ENCODE measurements at regions of chr7 and their contacts with region 1.

Region 1: GRCh38 chr7:140479062-140479738 is at the start of gene MKRN1:
- DNase-seq: peak; percentile 83 to 95 (median 93)
- ATAC-seq: peak; percentile 84
- H3K4me3 ChIP-seq: peak within 1 kb of the TSS; percentile 82 to 85
- H3K4me3 Mint-ChIP-seq: peak within 1 kb of the TSS; percentile 99
- H3K27ac ChIP-seq: peak within 1 kb of the TSS; percentile 69 to 81
- H3K27ac Mint-ChIP-seq: peak within 1 kb of the TSS; percentile 99
- H3K4me1 ChIP-seq: peaks cover 33% of the 10 kb centered on the region
- H3K4me1 Mint-ChIP-seq: peaks cover 27% of the 10 kb centered on the region
- H3K27me3 ChIP-seq: no peaks in the 10 kb centered on the region
- H3K27me3 Mint-ChIP-seq: no peaks in the 10 kb centered on the region
- CTCF ChIP-seq: no peak
- total RNA-seq, gene MKRN1: 146 to 148 TPM

Region 2: DNA sequence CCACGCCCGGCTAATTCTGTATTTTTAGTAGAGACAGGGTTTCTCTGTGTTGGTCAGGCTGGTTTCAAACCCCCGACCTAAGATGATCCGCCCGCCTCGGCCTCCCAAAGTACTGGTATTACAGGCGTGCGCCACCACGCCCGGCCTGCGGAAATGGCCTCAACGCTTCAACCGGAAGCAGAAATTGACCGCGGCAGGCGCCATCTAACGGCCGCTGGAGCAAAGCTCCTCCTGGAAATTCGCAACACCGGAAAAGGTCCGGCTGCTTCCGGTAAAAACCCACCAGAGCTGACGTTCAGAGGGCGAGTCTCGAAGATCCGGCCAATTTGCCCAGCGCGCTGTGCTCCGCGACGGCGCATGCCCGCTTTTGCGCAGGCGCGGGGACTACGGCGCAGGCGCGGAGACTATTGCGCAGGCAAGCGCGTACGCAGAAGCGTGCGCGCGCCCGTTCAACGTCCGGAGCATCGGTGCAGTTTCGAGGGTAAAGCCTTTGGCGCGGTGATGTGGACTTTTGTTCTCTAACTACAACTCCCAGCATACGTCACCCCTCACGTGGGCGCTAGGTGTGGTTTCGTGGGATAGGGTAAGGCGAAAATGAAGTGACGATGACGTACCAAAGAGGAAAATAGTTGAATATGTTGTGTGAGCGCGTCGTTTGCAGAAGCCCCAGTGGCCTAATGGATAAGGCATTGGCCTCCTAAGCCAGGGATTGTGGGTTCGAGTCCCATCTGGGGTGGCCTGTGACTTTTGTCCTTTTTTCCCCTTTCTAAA is 1139.0 kb before region 1 on chr7:
- CTCF ChIA-PET with region 1: no interaction called
- POLR2A ChIA-PET with region 1: no interaction called
- intact Hi-C with region 1: loop called in 1 of 2 experiments (anchors 5 kb)
- DNase-seq: peak; percentile 95 to 100 (median 97)
- ATAC-seq: peak; percentile 80
- H3K4me3 ChIP-seq: peak overlapping the region; percentile 69 to 85
- H3K4me3 Mint-ChIP-seq: peak overlapping the region; percentile 98
- H3K27ac ChIP-seq: peak overlapping the region; percentile 94 to 98
- H3K27ac Mint-ChIP-seq: peak overlapping the region; percentile 100
- H3K4me1 ChIP-seq: peaks cover 13% of the 10 kb centered on the region
- H3K4me1 Mint-ChIP-seq: peaks cover 32% of the 10 kb centered on the region
- H3K27me3 ChIP-seq: no peaks in the 10 kb centered on the region
- H3K27me3 Mint-ChIP-seq: peaks cover 2% of the 10 kb centered on the region
- CTCF ChIP-seq: peak; percentile 36

Region 3: DNA sequence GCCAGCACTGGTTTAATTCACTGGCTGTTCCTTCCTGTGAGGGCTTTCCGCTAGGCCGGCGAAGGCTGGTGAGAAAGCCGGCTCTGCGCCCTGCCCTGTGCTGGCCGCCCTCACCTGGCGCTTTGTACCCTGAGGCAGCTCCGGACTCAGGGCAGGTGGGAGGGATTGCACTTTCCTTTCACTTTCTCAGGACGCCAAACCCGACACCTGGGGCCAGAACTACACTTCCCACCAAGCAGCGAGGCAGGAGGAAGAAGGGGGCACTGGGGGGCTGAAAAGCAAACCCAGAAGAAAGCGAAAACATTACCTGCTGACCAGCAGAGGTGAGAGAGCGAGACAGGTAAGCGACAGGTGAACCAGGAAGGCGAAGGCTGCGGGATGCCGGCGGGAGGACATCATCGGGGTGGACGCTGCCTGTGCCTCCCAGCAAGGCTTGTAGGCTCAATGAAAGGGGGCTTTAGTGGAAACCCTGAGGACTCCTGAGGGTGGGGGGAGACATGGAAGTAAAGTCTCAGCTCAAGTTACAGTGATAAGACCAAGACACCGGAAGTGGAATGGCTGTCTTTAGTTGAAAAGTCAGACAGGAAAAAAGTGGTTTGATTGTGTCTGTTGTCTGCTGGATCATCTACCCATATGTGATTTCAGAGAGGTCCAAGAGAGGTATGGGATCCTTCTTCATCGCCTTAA is 75.2 kb before region 1 on chr7 and contains the start of gene RAB19:
- CTCF ChIA-PET with region 1: no interaction called
- POLR2A ChIA-PET with region 1: interaction called, 4 read pairs
- intact Hi-C with region 1: loop called (anchors 2 to 5 kb)
- DNase-seq: peak; percentile 12 to 79 (median 57)
- ATAC-seq: peak; percentile 88
- H3K4me3 ChIP-seq: peak within 1 kb of the TSS; percentile 65 to 78
- H3K4me3 Mint-ChIP-seq: peak within 1 kb of the TSS; percentile 97
- H3K27ac ChIP-seq: peak within 1 kb of the TSS; percentile 63 to 82
- H3K27ac Mint-ChIP-seq: peak within 1 kb of the TSS; percentile 98
- H3K4me1 ChIP-seq: peaks cover 7% of the 10 kb centered on the region
- H3K4me1 Mint-ChIP-seq: peaks cover 23% of the 10 kb centered on the region
- H3K27me3 ChIP-seq: no peaks in the 10 kb centered on the region
- H3K27me3 Mint-ChIP-seq: no peaks in the 10 kb centered on the region
- CTCF ChIP-seq: no peak
- total RNA-seq, gene RAB19: 1.9 to 4.2 TPM

Region 4: DNA sequence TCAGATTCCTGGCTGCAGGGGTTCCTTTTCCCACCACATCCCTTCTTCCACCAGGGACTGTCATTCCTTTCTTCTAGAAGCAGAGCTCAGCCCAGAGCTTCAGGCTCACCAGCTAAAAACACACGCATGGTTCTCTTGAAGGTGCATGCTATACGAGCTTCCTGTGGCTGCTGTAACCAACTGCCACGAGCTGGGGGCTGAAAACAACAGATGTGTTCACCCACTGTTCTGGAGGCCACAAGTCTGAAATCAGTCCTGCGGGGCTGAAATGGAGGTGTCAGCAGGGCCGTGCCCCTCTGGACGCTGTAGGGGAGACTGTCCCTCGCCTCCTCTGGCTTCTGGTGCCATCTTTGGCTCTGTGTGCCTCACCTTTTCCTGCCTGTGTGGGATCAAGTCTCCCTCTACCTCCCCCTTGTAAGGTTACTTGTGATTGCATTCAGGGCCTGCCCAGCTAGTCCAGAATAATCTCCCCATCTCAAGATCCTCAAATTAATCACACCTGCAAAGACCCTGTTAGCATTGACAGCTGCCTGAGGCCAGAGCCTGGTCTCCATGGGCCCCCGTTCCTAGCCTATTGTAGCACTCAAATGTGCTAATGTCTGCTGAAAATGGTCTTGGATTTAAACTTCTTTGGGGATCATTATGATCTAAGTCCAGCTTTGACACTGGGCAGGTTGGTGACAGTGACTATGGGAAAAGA is 61.6 kb before region 1 on chr7:
- CTCF ChIA-PET with region 1: no interaction called
- POLR2A ChIA-PET with region 1: no interaction called
- intact Hi-C with region 1: no loop called
- DNase-seq: no peak
- ATAC-seq: peak; percentile 49
- H3K4me3 ChIP-seq: no peak overlapping the region
- H3K4me3 Mint-ChIP-seq: no peak overlapping the region
- H3K27ac ChIP-seq: no peak overlapping the region
- H3K27ac Mint-ChIP-seq: peak overlapping the region; percentile 16
- H3K4me1 ChIP-seq: no peaks in the 10 kb centered on the region
- H3K4me1 Mint-ChIP-seq: peaks cover 8% of the 10 kb centered on the region
- H3K27me3 ChIP-seq: no peaks in the 10 kb centered on the region
- H3K27me3 Mint-ChIP-seq: no peaks in the 10 kb centered on the region
- CTCF ChIP-seq: no peak

Region 5: GRCh38 chr7:140653319-140654108 is 174.3 kb after region 1 on chr7:
- CTCF ChIA-PET with region 1: interaction called, 24 read pairs
- POLR2A ChIA-PET with region 1: interaction called, 5 read pairs
- intact Hi-C with region 1: loop called in 1 of 2 experiments (anchors 1 kb)
- DNase-seq: peak in 5 of 9 experiments; percentile 25 to 69 (median 55)
- ATAC-seq: peak; percentile 33
- H3K4me3 ChIP-seq: no peak overlapping the region
- H3K4me3 Mint-ChIP-seq: no peak overlapping the region
- H3K27ac ChIP-seq: no peak overlapping the region
- H3K27ac Mint-ChIP-seq: no peak overlapping the region
- H3K4me1 ChIP-seq: peaks cover 17% of the 10 kb centered on the region
- H3K4me1 Mint-ChIP-seq: peaks cover 22% of the 10 kb centered on the region
- H3K27me3 ChIP-seq: no peaks in the 10 kb centered on the region
- H3K27me3 Mint-ChIP-seq: peaks cover 15% of the 10 kb centered on the region
- CTCF ChIP-seq: peak; percentile 91

Region 6: GRCh38 chr7:140924019-140924820 is 445.0 kb after region 1 on chr7:
- CTCF ChIA-PET with region 1: no interaction called
- POLR2A ChIA-PET with region 1: no interaction called
- intact Hi-C with region 1: loop called (anchors 2 kb)
- DNase-seq: peak; percentile 55 to 95 (median 75)
- ATAC-seq: peak; percentile 65
- H3K4me3 ChIP-seq: peak overlapping the region; percentile 93
- H3K4me3 Mint-ChIP-seq: no peak overlapping the region
- H3K27ac ChIP-seq: peak overlapping the region; percentile 96 to 97
- H3K27ac Mint-ChIP-seq: no peak overlapping the region
- H3K4me1 ChIP-seq: peaks cover 13% of the 10 kb centered on the region
- H3K4me1 Mint-ChIP-seq: peaks cover 15% of the 10 kb centered on the region
- H3K27me3 ChIP-seq: no peaks in the 10 kb centered on the region
- H3K27me3 Mint-ChIP-seq: no peaks in the 10 kb centered on the region
- CTCF ChIP-seq: no peak